ENCODE measurements at regions of chr1 and their contacts with region 1.

Region 1: DNA sequence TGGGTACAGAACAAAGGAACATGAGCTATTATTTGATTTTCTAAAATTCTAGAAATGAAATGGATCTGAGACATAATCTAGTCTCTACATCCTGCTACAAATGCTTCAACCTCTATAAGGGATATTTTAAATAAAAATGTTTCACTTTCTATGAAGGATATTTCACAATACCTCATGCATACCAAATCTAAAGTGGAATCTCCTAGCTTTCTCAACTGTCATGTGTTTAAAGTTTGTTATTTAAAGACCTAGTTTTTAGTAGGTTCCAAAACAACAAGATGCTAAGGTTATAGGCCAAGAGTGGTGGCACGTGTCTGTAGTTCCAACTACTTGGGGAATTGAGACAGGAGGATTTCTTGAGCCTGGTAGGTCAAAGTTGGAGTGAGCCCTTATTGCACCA is 47.6 kb downstream of the KDM5B start:
- DNase-seq: no peak
- ATAC-seq: no peak
- H3K4me3 ChIP-seq: no peak overlapping the region
- H3K4me3 Mint-ChIP-seq: no peak overlapping the region
- H3K27ac ChIP-seq: no peak overlapping the region
- H3K27ac Mint-ChIP-seq: no peak overlapping the region
- H3K4me1 ChIP-seq: no peaks in the 10 kb centered on the region
- H3K4me1 Mint-ChIP-seq: no peaks in the 10 kb centered on the region
- H3K27me3 ChIP-seq: no peaks in the 10 kb centered on the region
- H3K27me3 Mint-ChIP-seq: no peaks in the 10 kb centered on the region
- CTCF ChIP-seq: no peak

Region 2: DNA sequence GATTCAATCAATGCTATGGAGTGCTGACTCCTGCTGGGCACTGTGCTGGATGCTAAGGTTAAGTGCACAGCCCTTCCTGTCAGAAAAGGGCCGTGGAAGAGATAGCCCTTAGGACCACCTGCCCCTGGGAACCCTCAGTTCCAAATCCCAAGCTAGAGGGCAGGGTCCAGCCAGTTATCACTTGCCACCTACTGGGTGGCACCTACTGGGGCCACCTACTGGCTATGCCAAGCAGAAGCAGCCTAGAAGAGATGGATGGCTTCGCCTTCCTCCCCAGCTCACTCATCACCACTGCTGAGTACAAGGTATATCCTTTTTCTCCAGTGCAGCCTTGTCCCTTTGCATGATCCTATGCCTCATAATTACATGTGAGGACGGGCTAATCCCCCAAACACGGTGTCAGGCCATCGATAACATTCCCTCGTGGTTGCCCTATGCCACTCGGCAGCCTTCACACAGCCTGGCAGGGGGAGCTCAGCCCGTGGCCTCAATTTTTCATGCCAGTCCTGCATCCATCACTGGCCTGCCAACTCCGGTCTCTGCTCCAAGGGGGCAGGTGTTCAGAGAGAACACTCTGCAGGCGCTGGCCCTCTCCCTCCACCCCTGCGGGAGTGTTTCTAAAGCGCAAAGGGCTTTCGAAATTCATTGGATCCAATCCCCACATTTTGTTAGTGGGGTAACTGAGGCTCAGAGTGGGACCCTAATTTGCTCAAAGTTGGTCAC is 99.3 kb before region 1 on chr1:
- CTCF ChIA-PET with region 1: no interaction called
- POLR2A ChIA-PET with region 1: no interaction called
- intact Hi-C with region 1: no loop called
- DNase-seq: peak in 1 of 9 experiments; percentile 34
- ATAC-seq: no peak
- H3K4me3 ChIP-seq: no peak overlapping the region
- H3K4me3 Mint-ChIP-seq: no peak overlapping the region
- H3K27ac ChIP-seq: no peak overlapping the region
- H3K27ac Mint-ChIP-seq: no peak overlapping the region
- H3K4me1 ChIP-seq: no peaks in the 10 kb centered on the region
- H3K4me1 Mint-ChIP-seq: no peaks in the 10 kb centered on the region
- H3K27me3 ChIP-seq: no peaks in the 10 kb centered on the region
- H3K27me3 Mint-ChIP-seq: peaks cover 37% of the 10 kb centered on the region
- CTCF ChIP-seq: no peak

Region 3: GRCh38 chr1:202810615-202811295 is 50.2 kb after region 1 on chr1 and contains the start of gene PCAT6:
- CTCF ChIA-PET with region 1: no interaction called
- POLR2A ChIA-PET with region 1: interaction called, 3 read pairs
- intact Hi-C with region 1: loop called in 1 of 2 experiments (anchors 5 kb)
- DNase-seq: peak; percentile 67 to 93 (median 84)
- ATAC-seq: peak; percentile 67
- H3K4me3 ChIP-seq: peak within 1 kb of the TSS; percentile 80 to 94
- H3K4me3 Mint-ChIP-seq: peak within 1 kb of the TSS; percentile 88
- H3K27ac ChIP-seq: peak within 1 kb of the TSS; percentile 51 to 72
- H3K27ac Mint-ChIP-seq: peak within 1 kb of the TSS; percentile 90
- H3K4me1 ChIP-seq: peaks cover 20% of the 10 kb centered on the region
- H3K4me1 Mint-ChIP-seq: peaks cover 34% of the 10 kb centered on the region
- H3K27me3 ChIP-seq: no peaks in the 10 kb centered on the region
- H3K27me3 Mint-ChIP-seq: no peaks in the 10 kb centered on the region
- CTCF ChIP-seq: no peak
- total RNA-seq, gene PCAT6: 0.92 to 1.6 TPM

Region 4: DNA sequence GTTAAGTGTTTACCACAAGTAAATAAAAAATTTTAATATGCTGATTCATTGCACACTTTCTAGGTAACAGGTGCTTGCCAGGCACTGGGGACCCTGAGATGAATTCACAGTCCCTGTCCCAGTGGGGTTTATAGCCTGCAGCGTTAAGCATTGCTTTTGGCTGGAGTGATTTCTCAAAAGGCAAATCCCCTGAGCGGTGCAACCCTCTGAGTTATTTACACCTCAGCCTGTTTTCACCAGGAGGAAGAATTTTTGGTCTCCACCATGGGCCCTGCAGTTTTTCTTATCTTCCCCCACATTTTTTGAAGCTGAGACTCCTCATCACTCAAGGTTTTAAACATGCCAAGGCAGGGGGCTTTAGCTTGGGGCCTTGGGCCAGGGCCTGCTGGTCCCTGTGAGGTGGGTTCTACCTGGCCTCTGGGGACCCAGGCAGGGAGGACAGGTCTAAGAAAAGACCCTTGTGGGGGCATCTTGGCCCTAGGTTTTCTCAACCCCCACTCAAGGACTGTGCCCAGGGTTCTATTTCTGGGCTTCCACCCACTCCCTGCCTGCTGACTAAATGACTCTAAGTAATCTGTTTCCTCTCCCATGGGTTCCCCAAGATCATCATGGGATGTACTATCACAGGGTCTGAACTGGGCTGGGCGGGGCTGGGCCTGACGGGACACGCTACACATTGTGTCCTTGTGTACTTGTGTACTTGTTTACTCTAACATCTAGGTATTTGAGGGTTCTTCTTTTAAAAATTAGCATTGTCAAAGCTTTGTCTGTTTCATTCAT is 479.1 kb after region 1 on chr1:
- CTCF ChIA-PET with region 1: no interaction called
- POLR2A ChIA-PET with region 1: no interaction called
- intact Hi-C with region 1: no loop called
- DNase-seq: no peak
- ATAC-seq: no peak
- H3K4me3 ChIP-seq: no peak overlapping the region
- H3K4me3 Mint-ChIP-seq: no peak overlapping the region
- H3K27ac ChIP-seq: no peak overlapping the region
- H3K27ac Mint-ChIP-seq: no peak overlapping the region
- H3K4me1 ChIP-seq: no peaks in the 10 kb centered on the region
- H3K4me1 Mint-ChIP-seq: no peaks in the 10 kb centered on the region
- H3K27me3 ChIP-seq: no peaks in the 10 kb centered on the region
- H3K27me3 Mint-ChIP-seq: peaks cover 29% of the 10 kb centered on the region
- CTCF ChIP-seq: no peak

Measured in CD8-positive, alpha-beta T cell (primary cell).